ENCODE measurements at regions of chr7 and their contacts with region 1.

Region 1: DNA sequence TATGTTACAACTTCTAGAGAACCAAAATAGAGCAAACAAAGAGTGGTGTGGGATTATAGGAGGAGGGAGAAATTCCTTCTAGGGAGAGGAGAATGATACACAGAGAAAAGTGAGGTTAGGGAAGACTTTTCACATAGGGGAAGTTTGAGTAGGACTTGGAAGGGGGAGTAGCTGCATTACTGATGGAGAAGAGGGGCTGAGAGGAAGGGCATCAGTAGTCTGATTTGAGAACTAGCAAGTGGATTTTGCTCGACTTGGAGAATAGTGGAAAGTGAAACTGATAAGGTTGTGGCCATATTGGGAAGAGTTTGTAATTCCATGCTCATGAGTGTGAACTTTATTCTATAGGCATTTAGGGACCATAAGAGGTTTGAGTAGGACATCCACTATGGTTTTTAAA is 6.1 kb downstream of the NRF1 start:
- DNase-seq: no peak
- H3K4me3 Mint-ChIP-seq: no peak overlapping the region
- H3K27ac Mint-ChIP-seq: no peak overlapping the region
- H3K4me1 Mint-ChIP-seq: peaks cover 62% of the 10 kb centered on the region
- H3K27me3 Mint-ChIP-seq: no peaks in the 10 kb centered on the region

Region 2: DNA sequence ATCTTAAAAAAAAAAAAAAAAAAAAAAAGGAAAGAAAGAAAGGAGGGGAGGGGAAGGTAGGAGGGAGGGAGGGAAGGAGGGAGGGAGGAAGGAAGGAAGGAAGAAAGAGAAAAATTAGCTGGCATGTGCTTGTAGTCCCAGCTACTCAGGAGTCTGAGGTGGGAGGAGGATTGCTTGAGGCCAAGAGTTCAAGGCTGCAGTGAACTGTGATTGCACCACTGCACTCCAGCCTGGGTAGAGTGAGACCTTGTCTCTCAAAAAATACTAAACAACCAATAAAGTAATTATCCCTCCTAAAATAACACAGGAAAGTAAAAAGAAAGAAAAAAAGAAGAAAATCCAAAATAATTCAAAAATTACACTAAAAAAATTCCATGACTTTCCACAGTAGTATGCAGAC is 20.0 kb before region 1 on chr7:
- CTCF ChIA-PET with region 1: no interaction called
- POLR2A ChIA-PET with region 1: no interaction called
- DNase-seq: no peak
- H3K4me3 Mint-ChIP-seq: no peak overlapping the region
- H3K27ac Mint-ChIP-seq: no peak overlapping the region
- H3K4me1 Mint-ChIP-seq: no peaks in the 10 kb centered on the region
- H3K27me3 Mint-ChIP-seq: peaks cover 4% of the 10 kb centered on the region

Region 3: GRCh38 chr7:129713544-129713943 is 95.9 kb after region 1 on chr7:
- CTCF ChIA-PET with region 1: no interaction called
- POLR2A ChIA-PET with region 1: no interaction called
- DNase-seq: no peak
- H3K4me3 Mint-ChIP-seq: no peak overlapping the region
- H3K27ac Mint-ChIP-seq: no peak overlapping the region
- H3K4me1 Mint-ChIP-seq: peaks cover 5% of the 10 kb centered on the region
- H3K27me3 Mint-ChIP-seq: no peaks in the 10 kb centered on the region

Region 4: GRCh38 chr7:129774359-129774758 is 156.7 kb after region 1 on chr7:
- CTCF ChIA-PET with region 1: no interaction called
- POLR2A ChIA-PET with region 1: no interaction called
- DNase-seq: no peak
- H3K4me3 Mint-ChIP-seq: no peak overlapping the region
- H3K27ac Mint-ChIP-seq: no peak overlapping the region
- H3K4me1 Mint-ChIP-seq: peaks cover 9% of the 10 kb centered on the region
- H3K27me3 Mint-ChIP-seq: peaks cover 34% of the 10 kb centered on the region

Region 5: GRCh38 chr7:130024390-130024789 is 406.7 kb after region 1 on chr7:
- CTCF ChIA-PET with region 1: no interaction called
- POLR2A ChIA-PET with region 1: interaction called, 20 read pairs
- DNase-seq: no peak
- H3K4me3 Mint-ChIP-seq: no peak overlapping the region
- H3K27ac Mint-ChIP-seq: no peak overlapping the region
- H3K4me1 Mint-ChIP-seq: peaks cover 3% of the 10 kb centered on the region
- H3K27me3 Mint-ChIP-seq: no peaks in the 10 kb centered on the region

Region 6: DNA sequence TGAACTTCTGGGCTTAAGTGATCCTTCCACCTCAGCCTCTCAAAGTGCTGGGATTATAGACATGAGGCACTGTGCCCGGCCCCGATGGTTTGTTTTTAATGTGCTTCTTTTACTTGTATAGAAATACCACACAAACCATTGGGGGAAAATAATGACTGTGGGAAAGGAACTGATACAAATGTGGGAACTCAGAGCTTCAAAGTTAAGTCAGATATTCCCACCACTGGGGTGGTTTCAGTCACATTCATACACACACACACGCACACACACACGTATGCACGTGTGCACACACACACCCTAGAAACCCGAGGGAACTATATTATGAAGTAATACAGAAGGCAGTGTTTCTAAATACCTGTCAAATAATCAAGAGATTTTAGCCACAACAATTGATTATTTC is 692.3 kb after region 1 on chr7:
- CTCF ChIA-PET with region 1: no interaction called
- POLR2A ChIA-PET with region 1: no interaction called
- DNase-seq: no peak
- H3K4me3 Mint-ChIP-seq: no peak overlapping the region
- H3K27ac Mint-ChIP-seq: no peak overlapping the region
- H3K4me1 Mint-ChIP-seq: no peaks in the 10 kb centered on the region
- H3K27me3 Mint-ChIP-seq: no peaks in the 10 kb centered on the region

Measured in activated CD4-positive, alpha-beta T cell treated with anti-CD3 and anti-CD28 coated beads, Interleukin-2, amount 10 ng/mL, durations not matched to agents 7 days and 5 days (primary cell).